ENCODE measurements at regions of chr17 and their contacts with region 1.

Region 1: DNA sequence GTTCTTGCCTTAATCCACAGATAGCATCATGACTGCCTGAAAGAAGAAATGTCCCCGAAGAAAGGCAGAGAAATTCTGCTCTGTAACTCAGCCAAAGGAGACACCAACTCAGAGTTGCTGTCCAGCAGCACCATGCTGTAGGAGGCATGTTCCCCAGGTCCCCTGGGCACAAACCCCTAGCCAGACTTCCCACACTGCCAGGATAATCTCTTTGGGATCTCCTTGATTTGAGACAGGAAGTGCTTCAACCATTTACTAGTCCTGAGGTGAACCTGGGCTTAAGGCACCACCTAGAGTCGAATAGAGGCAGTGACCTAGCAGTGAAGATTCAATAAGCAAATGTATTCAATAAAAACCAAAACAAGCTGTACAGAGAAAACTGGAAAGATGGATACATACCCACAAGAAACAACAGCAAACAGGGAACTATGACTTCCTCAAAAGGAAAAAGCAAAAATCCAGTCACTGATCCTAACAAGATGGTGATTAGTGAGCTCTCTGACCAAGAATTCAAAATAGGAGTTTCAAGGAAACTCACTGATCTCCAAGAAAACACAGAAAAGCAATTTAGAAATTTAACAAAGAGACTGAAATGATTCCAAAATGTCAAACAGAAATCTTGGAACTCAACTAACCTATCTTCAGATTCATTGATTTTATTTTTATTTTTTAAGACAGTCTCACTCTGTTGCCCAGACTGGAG is 5.7 kb downstream of the OR4D2 start:
- DNase-seq: peak in 8 of 9 experiments; percentile 19 to 82 (median 44)
- ATAC-seq: peak; percentile 76
- H3K4me3 ChIP-seq: no peak overlapping the region
- H3K4me3 Mint-ChIP-seq: peak overlapping the region; percentile 38
- H3K27ac ChIP-seq: peak overlapping the region in 1 of 2 experiments; percentile 72
- H3K27ac Mint-ChIP-seq: peak overlapping the region; percentile 66
- H3K4me1 ChIP-seq: peaks cover 43% of the 10 kb centered on the region
- H3K4me1 Mint-ChIP-seq: peaks cover 45% of the 10 kb centered on the region
- H3K27me3 ChIP-seq: no peaks in the 10 kb centered on the region
- H3K27me3 Mint-ChIP-seq: peaks cover 4% of the 10 kb centered on the region
- CTCF ChIP-seq: peak; percentile 66

Region 2: GRCh38 chr17:57892146-57892828 is 280.2 kb before region 1 on chr17:
- CTCF ChIA-PET with region 1: interaction called, 4 read pairs
- POLR2A ChIA-PET with region 1: no interaction called
- intact Hi-C with region 1: loop called in 1 of 2 experiments (anchors 10 kb)
- DNase-seq: peak; percentile 56 to 85 (median 76)
- ATAC-seq: peak; percentile 98
- H3K4me3 ChIP-seq: no peak overlapping the region
- H3K4me3 Mint-ChIP-seq: no peak overlapping the region
- H3K27ac ChIP-seq: no peak overlapping the region
- H3K27ac Mint-ChIP-seq: no peak overlapping the region
- H3K4me1 ChIP-seq: peaks cover 4% of the 10 kb centered on the region
- H3K4me1 Mint-ChIP-seq: peaks cover 6% of the 10 kb centered on the region
- H3K27me3 ChIP-seq: peaks cover 0 to 2% of the 10 kb centered on the region in 2 experiments
- H3K27me3 Mint-ChIP-seq: peaks cover 3% of the 10 kb centered on the region
- CTCF ChIP-seq: peak; percentile 75

Region 3: DNA sequence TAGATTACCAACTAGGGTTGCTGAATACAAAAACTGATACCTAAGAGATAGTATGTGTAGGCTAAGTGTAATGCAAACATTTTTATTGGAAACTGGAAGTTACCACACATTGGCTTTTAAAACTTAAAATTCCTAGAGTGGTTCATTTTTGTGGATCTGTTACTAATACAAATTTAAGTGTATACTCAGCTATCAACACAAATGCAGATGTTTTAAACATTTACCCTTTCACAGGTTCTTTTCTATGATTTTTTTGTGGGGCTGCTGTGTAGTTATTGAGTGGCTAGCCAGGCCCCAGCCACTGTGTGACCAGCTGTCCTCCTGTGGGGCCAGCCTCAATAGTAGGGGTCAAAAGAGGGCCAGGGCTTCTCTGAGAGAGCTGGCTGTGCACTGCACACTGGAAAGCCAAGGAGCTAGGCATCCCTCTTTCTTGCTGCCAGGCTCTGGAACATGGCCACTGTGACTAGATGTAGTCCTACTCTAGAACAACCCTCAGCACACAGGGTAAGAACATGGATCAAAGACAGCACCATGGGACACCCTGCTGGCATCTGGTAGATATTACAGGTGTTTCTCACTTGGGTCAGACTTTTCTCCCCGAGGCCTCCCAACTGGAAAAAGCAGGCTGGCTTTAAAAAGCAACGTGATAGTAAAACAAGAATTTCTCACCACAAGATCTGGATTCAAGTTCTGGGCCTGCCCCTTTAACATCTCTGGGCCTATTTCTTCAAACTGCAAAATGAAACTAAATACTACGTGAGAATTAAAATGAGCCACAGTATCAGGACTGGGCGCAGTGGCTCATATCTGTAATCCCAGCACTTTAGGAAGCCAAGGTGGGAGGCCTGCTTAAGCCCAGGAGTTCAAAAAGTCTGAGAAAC is 177.2 kb before region 1 on chr17:
- CTCF ChIA-PET with region 1: interaction called, 6 read pairs
- POLR2A ChIA-PET with region 1: interaction called, 3 read pairs
- intact Hi-C with region 1: loop called in 1 of 2 experiments (anchors 5 kb)
- DNase-seq: peak; percentile 13 to 81 (median 51)
- ATAC-seq: peak; percentile 92
- H3K4me3 ChIP-seq: no peak overlapping the region
- H3K4me3 Mint-ChIP-seq: peak overlapping the region; percentile 1
- H3K27ac ChIP-seq: peak overlapping the region in 1 of 2 experiments; percentile 43
- H3K27ac Mint-ChIP-seq: peak overlapping the region; percentile 72
- H3K4me1 ChIP-seq: peaks cover 13% of the 10 kb centered on the region
- H3K4me1 Mint-ChIP-seq: peaks cover 46% of the 10 kb centered on the region
- H3K27me3 ChIP-seq: no peaks in the 10 kb centered on the region
- H3K27me3 Mint-ChIP-seq: no peaks in the 10 kb centered on the region
- CTCF ChIP-seq: peak; percentile 56

Region 4: DNA sequence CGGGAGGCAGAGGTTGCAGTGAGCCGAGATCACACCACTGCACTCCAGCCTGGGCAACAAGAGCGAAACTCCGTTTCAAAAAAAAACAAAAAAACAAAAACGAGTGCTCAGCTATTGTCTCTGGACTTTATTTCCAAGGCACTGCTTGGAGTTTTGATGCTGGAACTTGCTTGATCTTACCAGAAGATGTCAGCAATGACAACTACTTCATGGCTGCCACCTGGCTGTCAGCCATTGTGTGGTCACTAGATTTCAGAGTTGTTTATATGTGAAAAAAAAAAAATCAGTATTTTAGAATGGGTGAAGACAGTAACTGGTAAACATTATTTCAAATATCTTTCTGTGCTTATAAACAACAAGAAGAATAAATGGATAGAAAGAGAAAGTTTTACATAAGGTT is 50.6 kb before region 1 on chr17:
- CTCF ChIA-PET with region 1: interaction called, 217 read pairs
- POLR2A ChIA-PET with region 1: interaction called, 6 read pairs
- intact Hi-C with region 1: loop called (anchors 1 kb)
- DNase-seq: peak in 8 of 9 experiments; percentile 24 to 81 (median 49)
- ATAC-seq: peak; percentile 74
- H3K4me3 ChIP-seq: no peak overlapping the region
- H3K4me3 Mint-ChIP-seq: no peak overlapping the region
- H3K27ac ChIP-seq: no peak overlapping the region
- H3K27ac Mint-ChIP-seq: no peak overlapping the region
- H3K4me1 ChIP-seq: peaks cover 5% of the 10 kb centered on the region
- H3K4me1 Mint-ChIP-seq: peaks cover 12% of the 10 kb centered on the region
- H3K27me3 ChIP-seq: no peaks in the 10 kb centered on the region
- H3K27me3 Mint-ChIP-seq: peaks cover 12% of the 10 kb centered on the region
- CTCF ChIP-seq: peak; percentile 51

Region 5: DNA sequence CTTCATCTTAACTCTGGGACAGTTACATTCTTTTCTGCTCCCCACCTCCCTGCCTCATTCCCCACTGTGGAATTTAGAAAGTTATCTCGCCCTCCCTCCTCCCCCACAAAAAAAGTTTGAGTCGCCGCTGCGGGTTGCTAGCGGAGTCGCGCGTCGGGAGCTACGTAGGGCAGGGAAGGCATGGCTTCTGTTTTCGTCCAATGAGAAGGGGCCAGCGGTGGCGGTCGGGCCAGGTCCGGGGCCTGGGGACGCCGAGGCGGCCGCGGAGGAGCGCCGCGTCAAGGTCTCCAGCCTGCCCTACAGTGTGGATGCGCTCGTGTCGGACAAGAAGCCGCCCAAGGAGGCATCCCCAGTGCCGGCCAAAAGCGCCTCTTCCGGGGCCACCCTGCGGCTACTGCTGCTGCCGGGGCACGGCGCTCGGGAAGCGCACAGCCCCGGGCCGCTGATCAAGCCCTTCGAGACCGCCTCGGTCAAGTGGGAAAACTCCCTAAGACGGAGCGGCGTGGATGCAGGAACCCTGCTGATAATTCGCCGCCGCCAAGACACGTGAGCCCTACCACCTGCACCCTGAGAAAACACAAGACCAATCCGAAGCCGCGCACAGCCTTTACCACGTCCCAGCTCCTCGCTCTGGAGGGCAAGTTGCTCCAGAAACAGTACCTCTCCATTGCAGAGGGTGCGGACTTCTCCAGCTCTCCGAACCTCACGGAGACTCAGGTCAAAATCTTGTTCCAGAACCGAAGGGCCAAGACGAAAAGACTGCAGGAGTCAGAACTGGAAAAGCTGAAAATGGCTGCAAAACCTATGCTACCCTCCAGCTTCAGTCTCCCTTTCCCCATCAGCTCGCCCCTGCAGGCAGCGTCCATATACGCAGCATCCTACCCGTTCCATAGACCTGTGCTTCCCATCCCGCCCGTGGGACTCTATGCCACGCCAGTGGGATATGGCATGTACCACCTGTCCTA is 15.4 kb before region 1 on chr17:
- CTCF ChIA-PET with region 1: interaction called, 66 read pairs
- POLR2A ChIA-PET with region 1: interaction called, 16 read pairs
- intact Hi-C with region 1: loop called (anchors 1 to 2 kb)
- DNase-seq: peak; percentile 19 to 81 (median 56)
- ATAC-seq: peak; percentile 54
- H3K4me3 ChIP-seq: peak overlapping the region; percentile 73 to 79
- H3K4me3 Mint-ChIP-seq: peak overlapping the region; percentile 85
- H3K27ac ChIP-seq: peak overlapping the region; percentile 84 to 92
- H3K27ac Mint-ChIP-seq: peak overlapping the region; percentile 87
- H3K4me1 ChIP-seq: peaks cover 60% of the 10 kb centered on the region
- H3K4me1 Mint-ChIP-seq: peaks cover 69% of the 10 kb centered on the region
- H3K27me3 ChIP-seq: no peaks in the 10 kb centered on the region
- H3K27me3 Mint-ChIP-seq: no peaks in the 10 kb centered on the region
- CTCF ChIP-seq: no peak

Region 6: DNA sequence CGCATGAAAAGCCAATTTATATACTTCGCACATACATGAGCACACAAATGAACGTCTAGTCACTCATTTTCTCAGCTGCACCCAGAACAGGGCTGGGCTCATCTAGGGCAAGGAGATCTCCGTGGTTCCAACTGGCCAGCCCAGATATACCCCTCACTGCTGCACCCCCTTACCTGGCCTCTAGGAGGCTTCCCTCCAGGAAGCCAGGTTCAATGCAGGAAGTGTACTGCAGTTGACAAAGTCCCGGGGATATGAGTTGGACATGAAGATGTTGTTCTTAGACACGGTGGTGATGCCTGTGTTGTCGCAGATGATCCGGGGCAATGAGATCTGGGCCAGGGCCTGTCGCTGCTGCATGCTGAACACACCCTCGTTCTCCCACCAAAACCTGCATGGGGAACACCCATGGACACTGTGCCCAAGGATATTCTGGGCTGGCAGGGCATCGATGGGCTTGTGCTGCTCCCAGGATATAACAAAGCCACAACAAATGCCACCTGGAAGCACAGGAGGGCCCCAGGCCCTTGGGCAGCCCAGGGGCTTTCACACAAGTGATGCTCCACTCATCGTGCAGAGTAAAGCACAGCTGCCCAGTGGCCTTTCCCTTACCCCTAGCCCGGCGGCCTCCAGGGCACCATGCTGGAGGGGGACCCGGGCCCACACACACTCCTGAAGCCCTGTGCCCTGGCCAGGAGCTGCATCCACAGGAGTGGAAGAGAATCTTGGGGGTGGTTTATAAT is 98.1 kb after region 1 on chr17:
- CTCF ChIA-PET with region 1: no interaction called
- POLR2A ChIA-PET with region 1: no interaction called
- intact Hi-C with region 1: no loop called
- DNase-seq: no peak
- ATAC-seq: peak; percentile 36
- H3K4me3 ChIP-seq: no peak overlapping the region
- H3K4me3 Mint-ChIP-seq: no peak overlapping the region
- H3K27ac ChIP-seq: no peak overlapping the region
- H3K27ac Mint-ChIP-seq: no peak overlapping the region
- H3K4me1 ChIP-seq: no peaks in the 10 kb centered on the region
- H3K4me1 Mint-ChIP-seq: no peaks in the 10 kb centered on the region
- H3K27me3 ChIP-seq: no peaks in the 10 kb centered on the region
- H3K27me3 Mint-ChIP-seq: peaks cover 11% of the 10 kb centered on the region
- CTCF ChIP-seq: no peak

Measured in CD8-positive, alpha-beta T cell (primary cell).